ENCODE measurements at regions of chr3 and their contacts with region 1.

Region 1: DNA sequence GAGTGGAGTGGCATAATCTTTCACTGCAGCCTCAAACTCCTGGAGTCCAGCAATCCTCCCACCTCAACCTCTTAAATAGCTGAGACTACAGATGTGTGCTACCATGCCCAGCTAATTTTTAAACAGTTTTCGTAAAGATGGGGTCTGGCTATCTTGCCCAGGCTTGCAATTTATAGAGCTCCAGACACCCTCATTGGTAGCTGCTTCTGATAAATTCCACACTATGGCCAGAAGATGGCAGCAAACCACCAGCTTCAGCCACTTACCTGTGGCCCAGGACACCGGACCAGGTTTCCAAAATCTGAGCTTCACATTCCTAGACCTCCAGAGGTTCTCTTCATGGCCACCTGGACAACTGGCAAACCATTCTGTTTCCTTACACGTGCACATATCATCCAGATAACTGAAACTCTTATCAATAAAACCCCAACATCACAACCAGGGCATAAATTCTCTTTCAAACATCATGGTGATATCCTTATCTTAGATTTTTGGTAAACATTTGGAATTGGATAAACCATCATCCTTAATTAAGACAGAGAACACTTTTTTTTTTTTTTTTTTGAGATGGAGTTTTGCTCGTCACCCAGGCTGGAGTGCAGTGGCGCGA is 28.9 kb downstream of the FBXW12 start:
- DNase-seq: peak in 1 of 2 donors; percentile 72
- H3K4me3 ChIP-seq: no peak overlapping the region
- H3K27ac ChIP-seq: peak overlapping the region; percentile 84 to 85
- H3K4me1 ChIP-seq: peaks cover 0 to 52% (median 47%) of the 10 kb centered on the region in 4 donors
- H3K27me3 ChIP-seq: no peaks in the 10 kb centered on the region
- CTCF ChIP-seq: peak; percentile 80 to 95

Region 2: GRCh38 chr3:48275292-48276015 is 125.5 kb before region 1 on chr3:
- intact Hi-C with region 1: loop called (anchors 5 kb)
- DNase-seq: no peak
- H3K4me3 ChIP-seq: no peak overlapping the region
- H3K27ac ChIP-seq: no peak overlapping the region
- H3K4me1 ChIP-seq: no peaks in the 10 kb centered on the region
- H3K27me3 ChIP-seq: no peaks in the 10 kb centered on the region
- CTCF ChIP-seq: no peak

Region 3: DNA sequence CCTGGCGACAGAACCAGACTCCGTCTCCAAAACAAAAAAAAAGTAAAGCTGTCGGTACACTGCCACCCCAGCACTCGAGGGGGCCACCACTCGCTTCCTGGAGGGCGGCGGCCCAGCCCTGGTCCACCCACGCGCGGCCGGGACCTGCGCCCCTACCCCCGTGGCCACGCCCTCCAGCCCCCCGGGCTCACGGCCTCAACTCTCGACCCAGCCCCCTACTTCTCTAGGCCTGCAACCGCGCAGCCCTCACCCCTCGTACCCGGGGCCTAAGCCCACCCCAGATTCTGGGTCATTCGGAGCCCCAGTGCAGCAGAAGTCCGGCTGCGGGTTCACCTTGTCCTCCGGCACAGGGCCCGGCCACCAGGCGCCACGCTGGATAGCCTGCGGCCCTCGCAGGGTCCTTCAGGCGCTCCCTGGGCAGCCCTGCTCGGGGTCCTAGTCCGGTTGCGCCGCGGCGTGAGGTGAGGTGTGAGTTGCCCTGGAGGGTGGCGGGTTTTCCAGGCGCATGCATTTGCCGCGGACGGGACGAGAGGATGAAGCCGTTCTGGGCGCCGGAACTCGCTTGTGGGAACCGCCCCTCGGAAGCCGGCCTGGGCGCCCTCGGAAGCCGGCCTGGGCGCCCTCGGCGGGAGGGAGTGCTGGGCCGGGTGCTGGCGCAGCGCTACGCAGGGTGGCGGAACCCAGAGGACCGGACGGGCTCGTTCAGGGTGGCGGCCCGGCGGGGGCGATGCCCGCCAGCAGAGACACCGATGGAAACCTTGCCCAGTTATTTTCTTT is 99.7 kb before region 1 on chr3:
- intact Hi-C with region 1: no loop called
- DNase-seq: peak; percentile 90 to 95
- H3K4me3 ChIP-seq: peak within 1 kb of the TSS; percentile 91 to 96
- H3K27ac ChIP-seq: peak within 1 kb of the TSS; percentile 97 to 99
- H3K4me1 ChIP-seq: peaks cover 0 to 18% (median 13%) of the 10 kb centered on the region in 4 donors
- H3K27me3 ChIP-seq: no peaks in the 10 kb centered on the region
- CTCF ChIP-seq: no peak

Region 4: DNA sequence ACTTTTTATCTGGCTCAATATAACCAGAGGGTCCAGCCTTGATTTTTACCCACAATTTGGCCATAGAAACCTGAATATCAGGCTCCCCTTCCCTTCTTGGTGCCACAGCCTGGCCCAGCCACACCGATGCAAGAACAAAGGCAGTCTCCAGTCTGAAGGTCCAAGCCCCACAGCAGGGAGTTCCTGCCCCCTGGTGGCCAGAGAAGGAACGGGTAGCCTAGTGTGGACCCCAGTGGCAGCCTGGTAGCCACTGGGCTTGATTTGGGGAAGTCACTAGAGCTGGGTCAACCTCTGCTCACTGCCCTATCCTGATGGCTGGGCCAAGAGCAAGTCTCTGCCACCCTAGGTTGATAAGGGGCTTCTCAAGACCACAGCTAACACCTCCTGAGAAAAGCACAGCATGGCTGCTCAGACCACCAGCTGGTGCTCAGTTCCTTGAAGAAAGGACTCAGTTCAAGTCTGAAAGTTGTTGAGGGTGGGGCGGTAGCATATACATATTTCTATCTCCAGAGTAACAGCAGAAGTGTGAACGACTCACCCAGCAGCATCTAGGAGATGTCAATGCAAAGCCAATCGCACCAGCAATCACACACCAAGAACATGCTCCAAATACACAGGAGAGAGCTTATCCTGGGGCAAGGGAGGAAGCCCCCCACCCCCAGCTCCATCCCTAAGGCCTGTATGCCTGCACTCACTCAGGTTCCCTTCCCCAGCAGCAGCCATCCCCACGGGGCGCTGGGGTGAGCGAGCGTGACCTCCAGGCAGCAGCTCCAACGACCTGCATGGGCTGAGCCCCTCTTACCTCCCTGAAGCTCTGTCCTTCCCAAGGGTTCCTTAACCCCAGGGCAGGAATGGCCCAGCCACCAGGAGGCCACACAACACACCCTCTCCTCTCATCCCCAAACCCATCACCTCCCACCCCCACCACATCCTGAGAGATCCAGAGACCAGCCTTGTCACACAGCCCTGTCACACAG is 148.1 kb after region 1 on chr3:
- intact Hi-C with region 1: loop called (anchors 10 kb)
- DNase-seq: peak; percentile 88 to 93
- H3K4me3 ChIP-seq: no peak overlapping the region
- H3K27ac ChIP-seq: peak overlapping the region; percentile 11 to 17
- H3K4me1 ChIP-seq: peaks cover 0 to 3% (median 0%) of the 10 kb centered on the region in 4 donors
- H3K27me3 ChIP-seq: no peaks in the 10 kb centered on the region
- CTCF ChIP-seq: peak; percentile 95 to 99

Region 5: GRCh38 chr3:48623851-48624547 is 223.1 kb after region 1 on chr3:
- intact Hi-C with region 1: no loop called
- DNase-seq: no peak
- H3K4me3 ChIP-seq: no peak overlapping the region
- H3K27ac ChIP-seq: no peak overlapping the region
- H3K4me1 ChIP-seq: peaks cover 0 to 26% (median 24%) of the 10 kb centered on the region in 4 donors
- H3K27me3 ChIP-seq: no peaks in the 10 kb centered on the region
- CTCF ChIP-seq: no peak